Activated T-helper 2 cell treated with anti-CD3 and anti-CD28 coated beads, Interferon-gamma antibody, Interleukin-2, Interleukin-4, amounts not matched to agents 10 μg/mL and 5 μg/mL and 100 μg/mL, durations not matched to agents 14 hours and 24 hours and 36 hours (primary cell): ENCODE measurements at regions of chr3 and their contacts with region 1.

Region 1: DNA sequence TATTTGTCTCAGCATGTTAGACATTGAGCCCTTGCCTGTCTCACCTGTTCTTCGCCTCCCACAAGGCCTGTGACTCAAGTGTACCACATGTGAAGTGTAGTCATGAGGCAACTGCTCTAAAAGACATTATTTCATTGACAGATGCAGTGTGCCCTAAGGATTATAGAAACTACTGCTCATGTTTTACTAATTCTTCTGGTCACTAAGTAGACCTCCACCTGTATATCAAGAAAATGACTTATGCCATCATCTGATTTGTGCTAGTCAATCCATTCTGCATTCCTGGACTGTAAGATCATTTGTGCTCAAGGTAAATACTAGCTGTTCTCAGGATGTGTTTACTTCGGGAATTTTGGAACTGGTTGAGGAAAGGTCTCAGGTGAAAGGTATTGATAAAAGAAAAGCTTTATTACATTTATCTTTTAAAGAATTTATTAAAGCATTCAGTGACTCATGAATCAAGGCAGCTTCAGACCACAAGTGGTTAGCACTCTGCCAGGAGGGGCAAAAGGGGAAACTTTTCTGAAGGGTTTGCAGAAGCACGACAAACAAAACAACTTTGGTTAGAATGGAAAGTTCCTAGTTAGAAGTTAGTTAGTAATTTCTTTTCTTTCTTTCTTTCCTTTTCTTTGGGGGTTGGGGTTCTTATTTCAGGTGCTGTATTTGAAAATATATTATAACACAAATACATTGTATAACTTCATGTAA is 465.3 kb upstream of the CBLB start:
- DNase-seq: no peak
- H3K4me3 Mint-ChIP-seq: peak overlapping the region; percentile 63
- H3K27ac Mint-ChIP-seq: peak overlapping the region; percentile 91
- H3K4me1 Mint-ChIP-seq: peaks cover 76% of the 10 kb centered on the region
- H3K27me3 Mint-ChIP-seq: no peaks in the 10 kb centered on the region

Region 2: DNA sequence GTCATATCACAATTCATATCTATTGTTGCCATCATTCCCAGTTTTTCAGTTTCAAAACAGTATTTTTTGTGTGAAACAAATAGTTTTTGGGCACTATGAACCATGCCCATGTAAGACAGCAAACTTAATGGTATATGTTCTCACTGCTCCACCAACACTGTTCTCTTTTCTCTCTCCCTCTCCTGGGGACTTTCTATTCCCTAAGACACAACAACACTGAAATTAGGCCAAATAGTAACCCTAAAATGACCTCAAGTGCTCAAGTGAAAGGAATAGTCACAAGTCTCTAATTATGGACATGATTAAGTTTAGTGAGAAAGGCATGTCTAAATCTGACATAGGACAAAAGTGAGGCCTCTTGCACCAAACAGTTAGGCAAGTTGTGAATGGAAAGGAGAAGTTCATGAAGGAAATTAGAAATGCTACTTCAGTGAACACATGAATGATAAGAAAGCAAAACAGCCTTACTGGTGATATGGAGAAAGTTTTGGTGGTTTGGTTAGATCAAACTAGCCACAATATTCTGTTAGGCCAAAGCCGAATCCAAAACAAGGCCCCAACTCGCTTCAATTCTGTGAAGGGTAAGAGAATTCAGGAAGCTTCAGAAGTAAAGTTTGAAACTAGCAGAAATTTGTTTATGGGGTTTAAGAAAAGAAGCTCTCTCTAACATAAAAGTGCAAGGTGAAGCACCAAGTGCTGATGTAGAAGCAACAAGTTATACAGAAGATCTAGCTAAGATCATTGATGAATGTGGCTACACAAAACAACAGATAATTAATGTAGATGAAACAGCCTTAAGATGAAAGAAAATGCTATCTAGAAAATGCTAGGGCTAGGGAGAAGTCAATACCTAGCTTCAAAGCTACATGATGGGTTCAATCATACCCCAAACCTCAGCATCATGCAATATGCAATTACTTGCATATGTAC is 569.4 kb before region 1 on chr3:
- intact Hi-C with region 1: loop called (anchors 5 kb)
- DNase-seq: no peak
- H3K4me3 Mint-ChIP-seq: peak overlapping the region; percentile 55
- H3K27ac Mint-ChIP-seq: peak overlapping the region; percentile 92
- H3K4me1 Mint-ChIP-seq: peaks cover 58% of the 10 kb centered on the region
- H3K27me3 Mint-ChIP-seq: no peaks in the 10 kb centered on the region

Region 3: DNA sequence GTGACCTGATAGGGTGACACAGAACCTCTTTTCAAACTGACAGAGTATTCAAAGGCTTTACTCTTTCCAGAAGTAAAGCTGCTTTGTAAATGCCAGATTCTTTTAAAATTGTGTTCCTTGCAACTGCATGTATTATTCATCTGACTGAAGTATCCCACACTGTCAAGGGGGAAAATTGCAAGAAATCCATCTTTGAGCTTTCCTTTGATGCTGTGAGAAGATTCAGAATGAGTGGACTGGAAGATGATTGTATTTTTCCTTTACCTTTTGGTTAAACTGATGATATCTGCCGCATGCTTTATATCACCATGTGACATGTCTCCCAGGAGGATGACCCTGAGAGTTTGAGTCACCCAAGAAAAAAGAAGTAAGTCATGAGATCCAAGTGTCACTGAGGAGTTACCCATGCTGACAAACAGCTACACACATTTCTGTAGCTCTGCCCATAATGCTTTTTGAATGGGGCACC is 214.4 kb before region 1 on chr3:
- intact Hi-C with region 1: loop called (anchors 5 kb)
- DNase-seq: no peak
- H3K4me3 Mint-ChIP-seq: no peak overlapping the region
- H3K27ac Mint-ChIP-seq: peak overlapping the region; percentile 80
- H3K4me1 Mint-ChIP-seq: peaks cover 23% of the 10 kb centered on the region
- H3K27me3 Mint-ChIP-seq: no peaks in the 10 kb centered on the region

Region 4: GRCh38 chr3:106215047-106215446 is 119.0 kb before region 1 on chr3:
- intact Hi-C with region 1: loop called (anchors 1 kb)
- DNase-seq: no peak
- H3K4me3 Mint-ChIP-seq: peak overlapping the region; percentile 19
- H3K27ac Mint-ChIP-seq: peak overlapping the region; percentile 79
- H3K4me1 Mint-ChIP-seq: peaks cover 47% of the 10 kb centered on the region
- H3K27me3 Mint-ChIP-seq: no peaks in the 10 kb centered on the region

Region 5: DNA sequence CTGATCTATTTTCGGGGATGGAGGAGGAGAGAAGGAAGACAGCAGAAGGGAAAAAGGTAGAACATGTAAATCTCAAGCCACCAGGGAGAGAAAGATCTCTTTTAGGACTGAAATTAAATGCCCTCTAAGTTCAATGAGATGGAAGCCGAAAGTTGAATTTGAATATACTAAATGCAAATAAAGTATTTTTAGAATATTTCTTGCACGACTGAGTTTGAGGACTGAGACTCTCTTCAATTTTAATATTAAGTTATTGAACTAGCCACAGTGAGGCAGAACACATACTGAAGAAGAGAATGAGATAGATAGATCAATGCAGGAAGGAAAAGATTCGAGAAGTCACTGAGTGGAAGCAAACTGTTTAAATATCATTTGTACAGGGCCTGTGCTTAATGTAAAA is 65.4 kb before region 1 on chr3:
- intact Hi-C with region 1: no loop called
- DNase-seq: no peak
- H3K4me3 Mint-ChIP-seq: no peak overlapping the region
- H3K27ac Mint-ChIP-seq: no peak overlapping the region
- H3K4me1 Mint-ChIP-seq: peaks cover 2% of the 10 kb centered on the region
- H3K27me3 Mint-ChIP-seq: no peaks in the 10 kb centered on the region

Region 6: DNA sequence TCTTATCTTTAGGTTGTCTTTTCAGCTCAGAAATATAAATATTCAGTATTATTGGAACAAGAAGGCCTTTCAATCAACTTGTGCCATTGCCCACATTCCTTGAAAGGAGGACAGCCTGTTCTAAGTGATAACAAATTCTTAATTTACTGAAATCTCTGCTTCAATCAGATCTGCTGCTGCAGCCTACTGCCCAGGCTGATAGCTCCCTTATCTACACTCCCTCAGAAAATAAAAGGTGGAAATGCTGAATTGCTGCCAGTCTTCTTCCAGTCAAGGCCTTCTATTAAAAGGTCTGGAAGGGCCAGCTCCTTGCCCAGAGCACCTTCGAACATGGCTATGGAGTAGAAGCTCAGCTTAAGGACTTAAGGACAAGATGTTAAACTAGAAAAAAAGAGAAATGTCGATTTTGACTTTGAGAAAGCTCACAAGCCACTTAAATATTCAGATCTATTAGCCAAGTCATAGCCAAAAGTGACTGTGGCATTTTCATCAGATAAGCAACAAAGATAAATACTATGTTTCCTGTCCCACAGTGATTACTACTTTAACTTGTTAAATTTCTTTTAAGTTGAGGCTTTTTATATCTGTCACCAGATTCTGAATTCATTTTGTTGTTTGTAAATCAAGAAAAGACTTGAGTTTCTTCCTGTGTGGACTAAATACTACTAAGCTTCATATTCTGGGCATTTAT is 15.3 kb after region 1 on chr3:
- intact Hi-C with region 1: loop called (anchors 1 kb)
- DNase-seq: no peak
- H3K4me3 Mint-ChIP-seq: no peak overlapping the region
- H3K27ac Mint-ChIP-seq: peak overlapping the region; percentile 19
- H3K4me1 Mint-ChIP-seq: peaks cover 22% of the 10 kb centered on the region
- H3K27me3 Mint-ChIP-seq: no peaks in the 10 kb centered on the region

Region 7: DNA sequence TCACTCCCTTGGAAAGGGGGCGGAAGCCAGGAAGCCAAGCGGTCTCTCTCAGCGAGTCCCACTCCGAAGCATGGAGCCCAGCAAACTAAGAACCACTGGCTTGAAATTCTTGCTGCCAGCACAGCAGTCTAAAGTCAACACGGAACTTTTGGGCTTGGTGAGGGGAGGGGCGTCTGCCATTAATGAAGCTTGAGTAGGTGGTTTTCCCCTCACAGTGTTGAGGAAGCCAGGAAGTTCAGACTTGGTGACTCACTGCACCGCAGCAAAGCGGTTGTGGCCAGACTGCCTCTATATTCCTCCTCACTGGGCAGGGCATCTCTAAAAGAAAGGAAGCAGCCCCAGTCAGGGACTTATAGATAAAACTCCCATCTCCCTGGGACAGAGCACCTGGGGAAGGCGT is 200.1 kb after region 1 on chr3:
- intact Hi-C with region 1: loop called (anchors 2 kb)
- DNase-seq: peak; percentile 26
- H3K4me3 Mint-ChIP-seq: no peak overlapping the region
- H3K27ac Mint-ChIP-seq: peak overlapping the region; percentile 14
- H3K4me1 Mint-ChIP-seq: peaks cover 16% of the 10 kb centered on the region
- H3K27me3 Mint-ChIP-seq: no peaks in the 10 kb centered on the region